SK-N-SH (cell line): ENCODE measurements at regions of chr2 and their contacts with region 1.

Region 1: GRCh38 chr2:170928824-170929685 is at the start of gene GORASP2:
- DNase-seq: peak; percentile 98
- H3K4me3 ChIP-seq: peak within 1 kb of the TSS; percentile 95 to 96
- H3K27ac ChIP-seq: peak within 1 kb of the TSS; percentile 90 to 92
- H3K4me1 ChIP-seq: peaks cover 10 to 16% of the 10 kb centered on the region in 2 experiments
- H3K27me3 ChIP-seq: no peaks in the 10 kb centered on the region
- CTCF ChIP-seq: peak; percentile 89
- EP300 ChIP-seq: no peak; a peak in 1 of 4 replicates
- RAD21 ChIP-seq: peak; percentile 62
- polyA plus RNA-seq, gene GORASP2: 127 and 148 TPM in 2 replicates

Region 2: DNA sequence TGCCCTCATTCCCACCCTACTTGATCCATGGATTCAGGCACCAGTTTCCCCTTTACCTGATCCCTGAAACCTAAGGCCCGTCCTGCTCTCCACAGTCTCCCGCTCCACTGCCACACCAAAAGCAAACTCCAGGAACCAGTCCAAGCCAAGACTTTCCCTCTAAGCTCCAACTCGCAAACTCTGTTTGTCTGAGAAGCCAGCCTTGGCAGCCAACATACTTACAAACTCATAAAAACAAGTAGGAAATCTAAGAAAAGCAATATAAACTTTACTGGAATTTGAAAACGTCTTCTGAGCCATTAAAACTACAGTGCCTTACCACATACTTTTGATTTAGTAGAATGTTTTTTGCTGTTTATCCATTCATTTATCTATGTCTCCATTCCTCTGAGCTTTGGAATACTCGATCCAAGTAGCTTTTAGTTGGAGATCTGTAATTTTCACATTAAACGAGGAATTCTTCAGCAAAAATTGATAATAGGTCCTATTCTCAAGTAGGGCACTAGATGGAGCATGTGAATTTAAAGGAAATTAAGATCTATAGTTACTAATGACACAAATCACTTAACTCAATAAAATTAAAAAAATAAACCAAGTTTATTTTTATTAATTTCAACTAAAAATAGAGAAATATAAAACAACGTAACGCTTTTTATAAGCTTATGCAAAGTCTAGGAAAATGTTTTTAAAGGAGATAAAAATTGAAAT is 551.4 kb before region 1 on chr2:
- CTCF ChIA-PET with region 1: no interaction called
- POLR2A ChIA-PET with region 1: no interaction called
- DNase-seq: no peak
- H3K4me3 ChIP-seq: no peak overlapping the region
- H3K27ac ChIP-seq: no peak overlapping the region
- H3K4me1 ChIP-seq: no peaks in the 10 kb centered on the region
- H3K27me3 ChIP-seq: no peaks in the 10 kb centered on the region
- CTCF ChIP-seq: peak; percentile 29
- EP300 ChIP-seq: no peak
- RAD21 ChIP-seq: no peak

Region 3: DNA sequence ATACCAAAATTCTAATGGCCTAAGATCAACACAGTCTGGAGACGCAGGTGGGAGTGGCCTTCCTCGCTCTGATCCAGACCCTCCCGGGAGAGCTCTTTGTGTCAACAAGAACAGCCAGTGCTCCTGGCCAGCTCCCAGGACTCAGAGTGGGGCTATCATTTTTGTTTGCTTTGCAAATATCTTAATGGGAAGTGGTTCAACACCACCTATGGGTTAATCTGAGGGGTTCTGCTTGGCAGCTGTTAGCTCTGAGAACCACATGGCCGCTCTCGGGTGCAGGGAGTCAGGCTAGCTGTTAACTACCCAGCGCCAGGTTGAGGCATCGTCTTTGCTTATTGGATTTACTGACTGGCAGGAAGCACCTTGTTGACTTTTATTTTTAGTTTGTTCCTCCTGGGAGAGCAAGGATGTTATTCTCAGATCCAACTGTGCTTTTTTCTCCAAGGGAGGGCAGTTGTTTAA is 398.7 kb before region 1 on chr2:
- CTCF ChIA-PET with region 1: no interaction called
- POLR2A ChIA-PET with region 1: no interaction called
- DNase-seq: peak; percentile 51
- H3K4me3 ChIP-seq: peak overlapping the region; percentile 21 to 45; a peak in 3 of 4 replicates
- H3K27ac ChIP-seq: no peak overlapping the region
- H3K4me1 ChIP-seq: peaks cover under 1 to 8% of the 10 kb centered on the region in 2 experiments; a peak in 3 of 4 replicates
- H3K27me3 ChIP-seq: no peaks in the 10 kb centered on the region
- CTCF ChIP-seq: no peak; the same call in 1 of the 2 replicates
- EP300 ChIP-seq: no peak
- RAD21 ChIP-seq: no peak

Region 4: DNA sequence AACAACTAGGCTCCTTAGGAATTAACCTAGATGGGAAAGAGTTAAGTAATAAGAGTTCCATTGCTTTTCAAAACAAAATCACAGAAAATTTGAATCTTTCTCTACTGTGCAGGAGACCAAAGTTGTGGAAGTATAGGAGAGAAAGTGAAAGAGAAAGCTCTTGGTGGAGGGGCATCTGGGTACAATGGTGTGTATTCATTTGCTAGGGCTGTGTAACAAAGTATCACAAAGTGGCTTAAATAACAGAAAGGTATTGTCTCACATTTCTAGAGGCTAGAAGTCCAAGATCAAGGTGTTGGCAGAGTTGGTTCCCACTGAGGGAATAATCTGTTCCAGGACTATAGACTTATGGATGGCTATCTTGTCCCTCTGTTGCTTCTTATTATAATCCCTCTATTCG is 50.5 kb before region 1 on chr2:
- CTCF ChIA-PET with region 1: interaction called, 12 read pairs
- POLR2A ChIA-PET with region 1: interaction called, 4 read pairs
- DNase-seq: no peak
- H3K4me3 ChIP-seq: no peak overlapping the region
- H3K27ac ChIP-seq: no peak overlapping the region
- H3K4me1 ChIP-seq: peaks cover 0 to under 1% of the 10 kb centered on the region in 2 experiments; a peak in 2 of 4 replicates
- H3K27me3 ChIP-seq: no peaks in the 10 kb centered on the region
- CTCF ChIP-seq: no peak
- EP300 ChIP-seq: no peak
- RAD21 ChIP-seq: no peak

Region 5: GRCh38 chr2:170940066-170940465 is 11.0 kb after region 1 on chr2:
- CTCF ChIA-PET with region 1: interaction called, 32 read pairs
- POLR2A ChIA-PET with region 1: no interaction called
- DNase-seq: no peak
- H3K4me3 ChIP-seq: no peak overlapping the region
- H3K27ac ChIP-seq: no peak overlapping the region
- H3K4me1 ChIP-seq: peaks cover 0 to 10% of the 10 kb centered on the region in 2 experiments; a peak in 2 of 4 replicates
- H3K27me3 ChIP-seq: no peaks in the 10 kb centered on the region
- CTCF ChIP-seq: no peak
- EP300 ChIP-seq: no peak
- RAD21 ChIP-seq: no peak

Region 6: GRCh38 chr2:170966648-170967436 is 37.8 kb after region 1 on chr2:
- CTCF ChIA-PET with region 1: interaction called, 12 read pairs
- POLR2A ChIA-PET with region 1: no interaction called
- DNase-seq: peak; percentile 65
- H3K4me3 ChIP-seq: no peak overlapping the region
- H3K27ac ChIP-seq: no peak overlapping the region
- H3K4me1 ChIP-seq: peaks cover 0 to 9% of the 10 kb centered on the region in 2 experiments; a peak in 1 of 4 replicates
- H3K27me3 ChIP-seq: no peaks in the 10 kb centered on the region
- CTCF ChIP-seq: peak; percentile 39; the same call in 1 of the 2 replicates
- EP300 ChIP-seq: no peak
- RAD21 ChIP-seq: no peak

Region 7: GRCh38 chr2:171154348-171154747 is 225.3 kb after region 1 on chr2:
- CTCF ChIA-PET with region 1: interaction called, 17 read pairs
- POLR2A ChIA-PET with region 1: no interaction called
- DNase-seq: no peak
- H3K4me3 ChIP-seq: no peak overlapping the region
- H3K27ac ChIP-seq: peak overlapping the region in 1 of 2 experiments; percentile 16; a peak in 1 of 4 replicates
- H3K4me1 ChIP-seq: peaks cover 4 to 22% of the 10 kb centered on the region in 2 experiments; a peak in 3 of 4 replicates
- H3K27me3 ChIP-seq: no peaks in the 10 kb centered on the region
- CTCF ChIP-seq: no peak
- EP300 ChIP-seq: no peak
- RAD21 ChIP-seq: no peak

Region 8: GRCh38 chr2:171416009-171416926 is 487.2 kb after region 1 on chr2:
- CTCF ChIA-PET with region 1: interaction called, 19 read pairs
- POLR2A ChIA-PET with region 1: interaction called, 5 read pairs
- DNase-seq: peak; percentile 74
- H3K4me3 ChIP-seq: peak overlapping the region; percentile 17 to 42; a peak in 3 of 4 replicates
- H3K27ac ChIP-seq: peak overlapping the region; percentile 56 to 82
- H3K4me1 ChIP-seq: peaks cover 0 to 17% of the 10 kb centered on the region in 2 experiments; a peak in 2 of 4 replicates
- H3K27me3 ChIP-seq: no peaks in the 10 kb centered on the region
- CTCF ChIP-seq: peak; percentile 91
- EP300 ChIP-seq: no peak
- RAD21 ChIP-seq: peak; percentile 94